GM12878 (cell line): ENCODE measurements at regions of chr14 and their contacts with region 1.

Region 1: GRCh38 chr14:61588419-61588901 is 106.9 kb upstream of the HIF1A start:
- DNase-seq: no peak
- ATAC-seq: no peak
- H3K4me3 ChIP-seq: no peak overlapping the region
- H3K27ac ChIP-seq: no peak overlapping the region
- H3K4me1 ChIP-seq: peaks cover 4% of the 10 kb centered on the region; the same call in 1 of the 2 replicates
- H3K27me3 ChIP-seq: no peaks in the 10 kb centered on the region
- CTCF ChIP-seq: no peak
- EP300 ChIP-seq: no peak
- POLR2A ChIP-seq: no peak
- RAD21 ChIP-seq: no peak

Region 2: DNA sequence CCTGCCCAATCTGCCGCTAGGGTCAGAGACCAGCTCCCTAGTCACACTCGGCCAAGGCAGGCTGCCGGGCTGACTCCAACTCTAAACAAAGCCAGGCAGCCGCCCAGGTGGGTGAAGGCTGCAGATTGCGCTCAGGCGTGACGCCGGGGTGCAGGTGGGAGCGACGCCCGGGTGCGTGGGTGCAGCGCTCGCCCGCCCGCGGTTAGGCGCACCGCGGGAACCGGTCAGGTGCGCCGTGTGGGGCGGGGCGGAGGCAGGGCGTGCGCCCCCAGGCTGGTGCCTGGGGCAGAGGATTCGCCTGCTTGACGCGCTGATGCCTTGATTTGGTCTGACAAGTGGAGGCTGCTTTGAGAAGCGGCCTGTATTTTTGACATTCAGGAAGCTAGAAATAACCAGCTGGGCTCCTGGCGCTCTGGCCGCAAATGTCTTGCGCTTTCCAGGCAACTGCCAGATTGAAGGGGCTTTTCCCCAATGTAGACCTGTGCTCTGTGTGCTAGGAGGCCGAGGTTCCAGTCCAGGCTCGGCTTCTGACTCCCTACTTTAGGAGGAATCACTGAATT is 19.8 kb before region 1 on chr14:
- CTCF ChIA-PET with region 1: no interaction called
- POLR2A ChIA-PET with region 1: interaction called, 4 read pairs
- RAD21 ChIA-PET with region 1: interaction called, 3 read pairs
- SMC1A ChIA-PET with region 1: interaction called, 8 read pairs
- in situ Hi-C with region 1: no loop called
- intact Hi-C with region 1: loop called (anchors 1 kb)
- DNase-seq: peak; percentile 52
- ATAC-seq: peak; percentile 92
- H3K4me3 ChIP-seq: peak overlapping the region; percentile 66
- H3K27ac ChIP-seq: no peak overlapping the region
- H3K4me1 ChIP-seq: peaks cover 21% of the 10 kb centered on the region
- H3K27me3 ChIP-seq: no peaks in the 10 kb centered on the region
- CTCF ChIP-seq: no peak
- EP300 ChIP-seq: no peak
- POLR2A ChIP-seq: peak; percentile 65
- RAD21 ChIP-seq: no peak

Region 3: GRCh38 chr14:61598980-61599379 is 10.5 kb after region 1 on chr14:
- CTCF ChIA-PET with region 1: interaction called, 4 read pairs
- POLR2A ChIA-PET with region 1: no interaction called
- RAD21 ChIA-PET with region 1: no interaction called
- SMC1A ChIA-PET with region 1: interaction called, 16 read pairs
- in situ Hi-C with region 1: no loop called
- intact Hi-C with region 1: no loop called
- DNase-seq: no peak
- ATAC-seq: peak; percentile 49
- H3K4me3 ChIP-seq: no peak overlapping the region
- H3K27ac ChIP-seq: no peak overlapping the region
- H3K4me1 ChIP-seq: peaks cover 15% of the 10 kb centered on the region
- H3K27me3 ChIP-seq: no peaks in the 10 kb centered on the region
- CTCF ChIP-seq: no peak
- EP300 ChIP-seq: no peak
- POLR2A ChIP-seq: no peak
- RAD21 ChIP-seq: no peak